T-cell (primary cell): ENCODE measurements at regions of chr15 and their contacts with region 1.

Region 1: GRCh38 chr15:48352474-48353072 is 21.3 kb downstream of the DUT start:
- DNase-seq: peak in 32 of 35 experiments; percentile 11 to 73 (median 34)
- ATAC-seq: peak; percentile 69 to 79 (median 73)
- H3K4me3 ChIP-seq: no peak overlapping the region
- H3K4me3 Mint-ChIP-seq: no peak overlapping the region
- H3K27ac ChIP-seq: no peak overlapping the region
- H3K27ac Mint-ChIP-seq: no peak overlapping the region
- H3K4me1 ChIP-seq: peaks cover 0 to 2% of the 10 kb centered on the region in 2 experiments
- H3K4me1 Mint-ChIP-seq: peaks cover 2 to 7% (median 2%) of the 10 kb centered on the region in 3 donors
- H3K27me3 ChIP-seq: no peaks in the 10 kb centered on the region
- H3K27me3 Mint-ChIP-seq: peaks cover 5 to 9% of the 10 kb centered on the region in 2 donors

Region 2: GRCh38 chr15:47196057-47196456 is 1156.5 kb before region 1 on chr15:
- CTCF ChIA-PET with region 1: interaction called in 1 of 2 experiments, 10 read pairs
- POLR2A ChIA-PET with region 1: no interaction called
- DNase-seq: peak in 26 of 35 experiments; percentile 2 to 46 (median 12)
- ATAC-seq: no peak
- H3K4me3 ChIP-seq: no peak overlapping the region
- H3K4me3 Mint-ChIP-seq: no peak overlapping the region
- H3K27ac ChIP-seq: no peak overlapping the region
- H3K27ac Mint-ChIP-seq: no peak overlapping the region
- H3K4me1 ChIP-seq: no peaks in the 10 kb centered on the region
- H3K4me1 Mint-ChIP-seq: no peaks in the 10 kb centered on the region
- H3K27me3 ChIP-seq: no peaks in the 10 kb centered on the region
- H3K27me3 Mint-ChIP-seq: peaks cover 0 to 3% of the 10 kb centered on the region in 2 donors

Region 3: GRCh38 chr15:48336940-48337339 is 15.6 kb before region 1 on chr15:
- CTCF ChIA-PET with region 1: interaction called, 12 read pairs
- POLR2A ChIA-PET with region 1: interaction called in 1 of 2 experiments, 3 read pairs
- DNase-seq: peak in 3 of 35 experiments; percentile 1 to 34 (median 4)
- ATAC-seq: no peak
- H3K4me3 ChIP-seq: no peak overlapping the region
- H3K4me3 Mint-ChIP-seq: no peak overlapping the region
- H3K27ac ChIP-seq: no peak overlapping the region
- H3K27ac Mint-ChIP-seq: no peak overlapping the region
- H3K4me1 ChIP-seq: peaks cover 5 to 7% of the 10 kb centered on the region in 2 experiments
- H3K4me1 Mint-ChIP-seq: peaks cover 8 to 14% (median 10%) of the 10 kb centered on the region in 3 donors
- H3K27me3 ChIP-seq: no peaks in the 10 kb centered on the region
- H3K27me3 Mint-ChIP-seq: no peaks in the 10 kb centered on the region

Region 4: DNA sequence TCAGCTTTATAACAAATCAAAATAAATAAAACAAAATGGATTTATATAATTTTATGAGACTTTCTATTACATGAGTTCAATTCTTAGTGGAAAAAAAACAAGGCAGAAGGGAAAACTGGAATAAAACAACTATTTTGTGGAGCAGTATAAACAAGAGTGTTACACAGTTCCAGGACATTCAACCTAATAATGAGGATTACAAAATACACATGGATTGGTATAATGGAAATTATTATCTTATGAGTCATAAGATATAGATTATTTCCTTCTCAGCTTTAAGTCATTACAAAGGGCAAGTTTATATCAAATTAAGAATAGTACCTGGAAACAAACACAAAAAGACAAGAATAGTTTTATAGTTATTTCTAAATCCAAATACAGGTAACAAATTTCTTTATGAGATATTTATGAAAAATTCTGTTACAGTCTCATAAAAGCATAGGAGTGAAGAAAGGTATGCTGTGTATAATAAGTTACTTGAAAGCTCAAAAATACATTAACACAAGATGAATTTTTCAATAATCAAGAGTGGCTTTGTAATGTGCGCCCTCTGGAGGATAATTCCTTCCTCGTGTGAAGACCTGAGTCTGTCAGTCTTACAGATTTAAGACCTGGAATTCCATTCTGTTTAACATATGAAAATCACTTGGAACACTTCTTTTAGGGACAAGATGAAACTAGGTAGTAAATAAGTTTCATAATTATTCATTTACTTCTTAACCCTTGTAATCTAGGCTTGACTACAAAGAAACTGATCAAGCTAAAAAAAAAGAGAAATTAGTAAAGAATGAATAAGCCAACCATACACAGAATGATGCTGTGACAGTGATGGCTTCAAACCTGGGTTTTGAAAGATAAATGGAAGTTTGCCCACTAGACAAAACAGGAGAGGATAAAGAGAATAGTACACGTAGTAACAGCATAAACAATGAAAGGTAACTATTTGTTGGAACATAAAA is 793.4 kb after region 1 on chr15:
- CTCF ChIA-PET with region 1: no interaction called
- POLR2A ChIA-PET with region 1: no interaction called
- DNase-seq: peak in 17 of 35 experiments; percentile 5 to 63 (median 14)
- ATAC-seq: peak in 2 of 4 experiments; percentile 34 to 57
- H3K4me3 ChIP-seq: no peak overlapping the region
- H3K4me3 Mint-ChIP-seq: no peak overlapping the region
- H3K27ac ChIP-seq: no peak overlapping the region
- H3K27ac Mint-ChIP-seq: no peak overlapping the region
- H3K4me1 ChIP-seq: peaks cover 0 to 6% of the 10 kb centered on the region in 2 experiments
- H3K4me1 Mint-ChIP-seq: peaks cover 50 to 62% (median 53%) of the 10 kb centered on the region in 3 donors
- H3K27me3 ChIP-seq: no peaks in the 10 kb centered on the region
- H3K27me3 Mint-ChIP-seq: no peaks in the 10 kb centered on the region